Esophagus muscularis mucosa (tissue), 4 donors: ENCODE measurements at regions of chr3 and their contacts with region 1.

Region 1: GRCh38 chr3:136390574-136390973 is 140.4 kb downstream of the PCCB start:
- DNase-seq: no peak
- H3K4me3 ChIP-seq: no peak overlapping the region
- H3K27ac ChIP-seq: no peak overlapping the region
- H3K4me1 ChIP-seq: peaks cover 0 to 10% (median 8%) of the 10 kb centered on the region in 4 donors
- H3K27me3 ChIP-seq: no peaks in the 10 kb centered on the region
- CTCF ChIP-seq: no peak
- EP300 ChIP-seq: no peak
- POLR2A ChIP-seq: no peak

Region 2: DNA sequence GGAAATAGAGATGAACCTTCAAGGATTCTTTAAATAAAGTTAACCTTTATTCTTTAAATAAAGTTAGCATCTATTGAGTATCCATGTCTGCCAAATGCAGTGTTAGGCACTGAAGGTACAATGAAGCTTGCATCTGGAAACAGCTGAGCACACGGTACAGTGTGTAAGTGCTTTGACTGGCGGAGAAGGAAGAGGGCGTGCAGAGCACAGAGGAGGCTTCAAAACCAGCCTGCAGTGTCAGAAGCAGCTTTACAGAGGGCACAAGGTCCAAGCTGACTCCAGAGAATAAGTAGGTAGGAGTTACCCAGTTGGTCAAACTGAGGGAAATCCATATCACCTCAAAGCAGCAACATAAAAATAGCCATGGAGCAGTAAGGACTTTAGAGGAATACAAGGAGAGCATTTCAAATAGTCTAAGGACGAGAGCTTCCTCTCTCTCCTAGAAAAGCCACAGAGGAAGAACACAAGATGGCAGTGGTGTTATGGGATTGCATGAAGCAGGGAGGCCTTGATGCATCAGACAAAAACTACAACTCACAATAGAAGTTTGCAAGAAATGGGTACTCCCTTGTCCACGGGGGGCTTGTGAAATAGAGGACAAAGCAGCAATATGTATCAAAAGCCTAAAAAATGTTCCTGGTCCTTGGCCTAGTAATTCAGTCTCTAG is 485.4 kb before region 1 on chr3:
- intact Hi-C with region 1: no loop called
- DNase-seq: peak; percentile 34
- H3K4me3 ChIP-seq: no peak overlapping the region
- H3K27ac ChIP-seq: no peak overlapping the region
- H3K4me1 ChIP-seq: no peaks in the 10 kb centered on the region
- H3K27me3 ChIP-seq: no peaks in the 10 kb centered on the region
- CTCF ChIP-seq: no peak
- EP300 ChIP-seq: no peak
- POLR2A ChIP-seq: no peak

Region 3: DNA sequence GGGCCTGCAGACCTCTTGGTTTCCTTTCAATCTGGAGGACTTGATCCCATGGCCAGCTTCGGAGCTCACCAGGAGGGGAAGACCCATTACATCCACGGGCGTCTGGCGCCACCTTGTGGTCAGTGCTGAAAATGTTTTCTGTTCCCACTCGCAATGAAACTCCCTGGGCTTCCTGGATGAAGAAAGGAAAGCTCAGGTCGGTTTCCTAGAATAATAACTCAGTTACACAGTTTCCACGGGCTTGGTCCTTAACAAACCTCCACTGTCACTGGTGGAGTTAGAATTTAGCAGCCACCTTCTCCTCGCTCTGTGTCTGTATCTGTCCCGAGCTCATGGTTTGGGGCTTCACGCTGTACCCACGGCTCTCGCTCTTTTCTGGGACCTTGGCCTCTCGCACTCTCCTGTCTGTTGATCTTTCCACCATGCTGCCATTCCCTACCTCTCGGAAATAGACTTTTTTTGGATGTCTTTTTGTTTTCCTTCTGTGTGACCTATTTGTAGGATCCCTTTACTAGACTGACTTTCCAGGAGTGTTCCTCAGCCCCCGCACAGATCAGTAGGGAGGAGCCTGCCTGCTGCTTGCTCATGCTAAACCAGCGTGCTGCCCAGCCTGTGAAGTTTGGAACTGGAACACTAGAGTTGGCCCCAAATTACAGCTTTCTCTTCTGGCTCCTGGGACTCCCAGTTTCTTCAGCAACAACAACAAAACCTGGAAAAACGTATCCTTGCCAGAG is 623.5 kb after region 1 on chr3:
- intact Hi-C with region 1: loop called (anchors 5 kb)
- DNase-seq: peak; percentile 98
- H3K4me3 ChIP-seq: peak overlapping the region; percentile 48 to 62 (median 52)
- H3K27ac ChIP-seq: peak overlapping the region; percentile 71 to 81 (median 73)
- H3K4me1 ChIP-seq: peaks cover 8 to 12% (median 9%) of the 10 kb centered on the region in 4 donors
- H3K27me3 ChIP-seq: no peaks in the 10 kb centered on the region
- CTCF ChIP-seq: peak; percentile 85 to 96 (median 91)
- EP300 ChIP-seq: no peak
- POLR2A ChIP-seq: no peak